Activated CD4-positive, alpha-beta T cell treated with anti-CD3 and anti-CD28 coated beads, Interleukin-2, amount 10 ng/mL, durations not matched to agents 24 days and 14 days (primary cell): ENCODE measurements at regions of chr17 and their contacts with region 1.

Region 1: GRCh38 chr17:49694847-49695683 is 12.7 kb downstream of the SLC35B1 start:
- DNase-seq: peak; percentile 92
- H3K4me3 Mint-ChIP-seq: peak overlapping the region; percentile 58
- H3K27ac Mint-ChIP-seq: peak overlapping the region; percentile 82
- H3K4me1 Mint-ChIP-seq: peaks cover 32% of the 10 kb centered on the region
- H3K27me3 Mint-ChIP-seq: no peaks in the 10 kb centered on the region

Region 2: DNA sequence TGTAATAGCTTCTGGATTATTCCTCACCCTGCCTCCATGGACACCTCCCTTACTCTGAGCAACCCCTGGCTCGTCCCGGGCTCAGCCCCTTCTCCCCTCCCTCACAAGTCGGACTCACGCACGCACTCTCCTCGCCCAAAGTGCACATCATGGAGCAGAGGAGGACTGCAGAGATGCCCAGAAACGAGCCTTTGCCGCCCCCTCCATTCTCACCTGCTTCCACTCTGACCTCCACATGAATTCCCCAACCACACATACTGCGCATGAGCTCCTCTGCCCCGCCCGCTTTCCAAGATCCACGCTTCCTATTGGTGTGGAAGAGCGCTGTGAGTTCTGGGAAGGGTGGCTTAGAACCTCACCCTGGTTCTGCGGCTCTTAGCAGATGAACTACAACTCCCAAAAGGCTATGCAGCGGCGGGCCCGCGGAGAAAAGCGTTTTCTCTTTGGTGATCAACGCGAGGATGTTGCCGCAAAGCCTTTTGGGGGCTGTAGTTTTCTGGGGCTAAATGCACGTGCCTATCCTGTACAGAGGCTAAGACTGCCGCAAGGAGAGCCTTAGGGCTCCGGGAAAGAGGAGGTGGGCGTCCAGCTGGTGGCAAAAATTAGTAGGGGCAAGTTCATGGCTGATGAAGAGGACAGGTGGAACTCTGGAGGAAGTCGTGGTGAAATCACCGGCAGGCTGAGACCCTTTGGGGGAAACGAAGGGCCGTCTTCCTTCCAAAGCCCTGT is 280.3 kb before region 1 on chr17 and contains the start of gene PHB1:
- intact Hi-C with region 1: loop called (anchors 5 kb)
- DNase-seq: peak; percentile 98
- H3K4me3 Mint-ChIP-seq: peak within 1 kb of the TSS; percentile 91
- H3K27ac Mint-ChIP-seq: peak within 1 kb of the TSS; percentile 83
- H3K4me1 Mint-ChIP-seq: peaks cover 5% of the 10 kb centered on the region
- H3K27me3 Mint-ChIP-seq: peaks cover 4% of the 10 kb centered on the region
- total RNA-seq, gene PHB1: 440 and 448 TPM in 2 replicates

Region 3: GRCh38 chr17:49567871-49568694 is 127.0 kb before region 1 on chr17:
- intact Hi-C with region 1: loop called (anchors 1 kb)
- DNase-seq: peak; percentile 95
- H3K4me3 Mint-ChIP-seq: peak overlapping the region; percentile 70
- H3K27ac Mint-ChIP-seq: no peak overlapping the region
- H3K4me1 Mint-ChIP-seq: peaks cover 32% of the 10 kb centered on the region
- H3K27me3 Mint-ChIP-seq: peaks cover 35% of the 10 kb centered on the region

Region 4: DNA sequence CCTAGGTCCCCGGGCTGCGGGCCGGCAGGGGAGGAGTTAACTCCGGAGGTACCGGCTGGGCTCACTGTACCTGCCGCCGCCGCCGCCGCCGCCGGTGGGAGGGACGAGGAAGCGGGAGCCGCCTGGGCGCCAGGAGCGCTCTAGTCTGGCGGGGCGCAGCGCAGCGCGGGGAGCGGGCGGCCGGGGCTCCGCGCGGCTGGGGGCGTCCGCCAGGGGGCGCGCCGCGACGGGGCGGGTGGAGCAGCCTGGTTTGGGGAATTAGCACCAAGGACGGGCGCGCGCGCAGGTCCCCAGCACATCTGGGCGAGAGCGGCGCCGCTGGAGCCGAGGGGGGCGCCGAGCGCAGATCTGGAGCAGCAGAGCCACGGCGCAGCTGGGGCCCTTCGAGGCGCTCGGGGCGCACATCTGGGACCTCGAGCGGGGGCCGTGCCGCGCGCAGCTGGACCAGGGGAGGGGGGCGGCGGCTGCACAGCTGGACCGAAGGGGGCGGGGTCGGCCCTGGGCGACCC is 119.4 kb before region 1 on chr17 and contains the start of gene NXPH3:
- intact Hi-C with region 1: loop called (anchors 1 kb)
- DNase-seq: peak; percentile 93
- H3K4me3 Mint-ChIP-seq: peak within 1 kb of the TSS; percentile 71
- H3K27ac Mint-ChIP-seq: peak within 1 kb of the TSS; percentile 35
- H3K4me1 Mint-ChIP-seq: peaks cover 15% of the 10 kb centered on the region
- H3K27me3 Mint-ChIP-seq: peaks cover 63% of the 10 kb centered on the region
- total RNA-seq, gene NXPH3: not detected in 2 replicates

Region 5: GRCh38 chr17:49851387-49852291 is 156.6 kb after region 1 on chr17:
- intact Hi-C with region 1: loop called (anchors 2 kb)
- DNase-seq: peak; percentile 88
- H3K4me3 Mint-ChIP-seq: peak overlapping the region; percentile 87
- H3K27ac Mint-ChIP-seq: peak overlapping the region; percentile 81
- H3K4me1 Mint-ChIP-seq: peaks cover 15% of the 10 kb centered on the region
- H3K27me3 Mint-ChIP-seq: peaks cover 17% of the 10 kb centered on the region